ENCODE measurements at regions of chr17 and their contacts with region 1.

Region 1: DNA sequence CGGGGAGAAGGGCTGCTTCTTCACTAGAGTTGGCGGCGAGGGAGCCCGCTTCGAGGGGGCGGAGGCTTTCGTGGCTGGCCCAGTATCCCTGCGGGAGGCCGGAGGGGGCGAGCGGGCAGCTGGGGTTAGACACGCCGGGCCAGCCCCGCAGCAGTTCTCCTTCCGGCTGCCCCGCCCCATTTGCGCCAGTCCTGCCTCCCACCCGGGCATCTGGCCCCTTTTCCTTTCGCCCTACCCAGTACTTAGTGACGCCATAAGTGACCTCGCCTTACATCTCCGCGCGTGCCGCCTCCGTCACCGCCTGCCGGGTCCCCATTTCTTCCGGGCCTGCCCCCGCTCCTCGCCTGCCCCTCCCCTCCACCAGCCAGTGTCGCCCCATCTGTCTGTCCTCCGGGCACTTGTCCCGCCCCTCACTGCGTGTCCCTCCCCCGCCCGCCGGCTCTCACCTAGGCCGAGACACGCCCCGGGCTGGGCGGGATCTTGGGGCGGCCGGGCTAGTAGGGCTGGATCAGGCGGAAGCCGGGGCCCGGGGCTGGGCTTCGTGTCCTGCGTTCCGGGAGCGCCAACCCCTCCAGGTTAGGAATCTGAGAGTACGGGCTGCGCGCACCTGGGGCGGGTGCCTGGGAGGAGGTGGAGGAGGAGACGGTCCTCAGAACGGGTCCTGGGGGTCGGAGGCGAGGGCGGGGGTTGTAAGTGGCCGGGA is 14.3 kb downstream of the SPATA32 start:
- DNase-seq: peak; percentile 99
- H3K4me3 Mint-ChIP-seq: peak overlapping the region; percentile 86
- H3K27ac Mint-ChIP-seq: peak overlapping the region; percentile 94
- H3K4me1 Mint-ChIP-seq: peaks cover 59% of the 10 kb centered on the region
- H3K27me3 Mint-ChIP-seq: no peaks in the 10 kb centered on the region

Region 2: GRCh38 chr17:45123930-45124796 is 123.4 kb before region 1 on chr17:
- CTCF ChIA-PET with region 1: no interaction called
- POLR2A ChIA-PET with region 1: no interaction called
- intact Hi-C with region 1: no loop called
- DNase-seq: peak; percentile 62
- H3K4me3 Mint-ChIP-seq: no peak overlapping the region
- H3K27ac Mint-ChIP-seq: no peak overlapping the region
- H3K4me1 Mint-ChIP-seq: no peaks in the 10 kb centered on the region
- H3K27me3 Mint-ChIP-seq: peaks cover 1% of the 10 kb centered on the region

Region 3: GRCh38 chr17:45184144-45184543 is 63.4 kb before region 1 on chr17:
- CTCF ChIA-PET with region 1: no interaction called
- POLR2A ChIA-PET with region 1: no interaction called
- intact Hi-C with region 1: no loop called
- DNase-seq: no peak
- H3K4me3 Mint-ChIP-seq: no peak overlapping the region
- H3K27ac Mint-ChIP-seq: no peak overlapping the region
- H3K4me1 Mint-ChIP-seq: no peaks in the 10 kb centered on the region
- H3K27me3 Mint-ChIP-seq: no peaks in the 10 kb centered on the region

Region 4: DNA sequence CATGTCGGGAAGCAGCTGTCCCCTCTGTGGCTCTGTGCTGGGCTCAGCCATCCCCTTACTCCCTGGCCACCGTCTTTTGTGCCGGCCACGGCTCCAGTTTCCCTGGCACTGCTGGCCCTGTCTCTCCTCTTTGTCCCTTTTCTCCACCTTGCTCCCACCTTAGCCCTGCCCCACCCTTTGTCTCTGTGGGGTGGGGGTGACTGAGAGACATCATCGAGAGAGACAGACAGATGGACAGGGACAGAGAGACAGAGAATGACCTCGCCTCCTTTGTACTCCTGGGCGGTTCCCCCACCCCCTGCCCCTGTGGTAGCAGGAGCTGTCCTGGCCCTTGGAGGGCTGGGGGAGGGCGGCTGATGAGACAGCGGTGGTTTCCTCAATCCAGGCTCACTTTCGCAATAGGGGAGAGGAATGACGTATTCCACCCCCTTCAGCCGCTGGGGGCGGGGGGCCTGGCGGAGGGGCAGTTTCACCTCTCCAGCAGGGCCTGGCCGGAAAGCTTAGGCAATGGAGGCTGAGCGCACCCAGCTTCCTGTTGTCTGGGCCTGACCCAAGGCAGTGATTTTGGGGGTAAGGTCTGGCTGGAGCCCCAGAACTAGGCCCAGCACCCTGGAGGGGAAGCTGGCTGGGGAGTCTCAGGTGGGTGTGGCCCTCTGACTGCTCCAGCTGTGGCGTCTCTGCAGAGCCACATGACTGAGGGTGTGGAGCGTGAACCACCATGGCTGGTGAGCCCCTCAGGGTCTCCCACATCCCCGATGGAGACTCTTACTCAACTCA is 18.6 kb before region 1 on chr17:
- CTCF ChIA-PET with region 1: interaction called, 7 read pairs
- POLR2A ChIA-PET with region 1: interaction called, 23 read pairs
- intact Hi-C with region 1: loop called (anchors 1 kb)
- DNase-seq: peak; percentile 96
- H3K4me3 Mint-ChIP-seq: peak overlapping the region; percentile 100
- H3K27ac Mint-ChIP-seq: peak overlapping the region; percentile 100
- H3K4me1 Mint-ChIP-seq: peaks cover 86% of the 10 kb centered on the region
- H3K27me3 Mint-ChIP-seq: no peaks in the 10 kb centered on the region

Region 5: GRCh38 chr17:45235416-45236281 is 11.9 kb before region 1 on chr17:
- CTCF ChIA-PET with region 1: interaction called, 23 read pairs
- POLR2A ChIA-PET with region 1: interaction called, 10 read pairs
- intact Hi-C with region 1: no loop called
- DNase-seq: peak; percentile 83
- H3K4me3 Mint-ChIP-seq: no peak overlapping the region
- H3K27ac Mint-ChIP-seq: peak overlapping the region; percentile 73
- H3K4me1 Mint-ChIP-seq: peaks cover 63% of the 10 kb centered on the region
- H3K27me3 Mint-ChIP-seq: no peaks in the 10 kb centered on the region

Measured in activated CD4-positive, alpha-beta memory T cell treated with anti-CD3 and anti-CD28 coated beads for 36 hours (primary cell).